PC-3 (cell line): ENCODE measurements at regions of chr6 and their contacts with region 1.

Region 1: GRCh38 chr6:48505621-48506020 is 394.6 kb upstream of the PTCHD4 start:
- DNase-seq: no peak
- ATAC-seq: no peak
- H3K4me3 ChIP-seq: no peak overlapping the region
- H3K27ac ChIP-seq: no peak overlapping the region
- H3K4me1 ChIP-seq: no peaks in the 10 kb centered on the region
- H3K27me3 ChIP-seq: no peaks in the 10 kb centered on the region
- CTCF ChIP-seq: no peak

Region 2: DNA sequence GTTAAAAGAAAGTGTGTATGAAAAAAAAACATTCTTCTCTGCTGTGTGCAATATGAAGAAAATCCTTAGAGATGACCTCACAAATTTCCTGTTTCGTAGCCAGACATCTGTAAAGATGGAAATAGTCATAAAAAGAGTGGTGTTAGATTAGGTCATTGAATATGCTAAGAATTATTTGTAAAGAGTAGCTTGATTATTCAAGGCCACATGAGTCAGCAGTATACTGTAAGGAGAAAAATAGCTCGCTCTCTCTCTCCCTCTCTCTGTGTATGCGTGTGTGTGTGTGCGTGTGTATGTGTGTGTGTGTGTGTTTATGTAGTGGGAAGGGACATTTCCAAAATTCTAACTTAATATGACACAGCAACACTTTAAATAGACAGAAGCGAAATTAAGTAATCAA is 473.5 kb before region 1 on chr6:
- CTCF ChIA-PET with region 1: no interaction called
- POLR2A ChIA-PET with region 1: interaction called, 15 read pairs
- intact Hi-C with region 1: no loop called
- DNase-seq: peak; percentile 36
- ATAC-seq: no peak
- H3K4me3 ChIP-seq: no peak overlapping the region
- H3K27ac ChIP-seq: no peak overlapping the region
- H3K4me1 ChIP-seq: no peaks in the 10 kb centered on the region
- H3K27me3 ChIP-seq: no peaks in the 10 kb centered on the region
- CTCF ChIP-seq: no peak